ENCODE measurements at regions of chr17 and their contacts with region 1.

Region 1: GRCh38 chr17:7484067-7484918 is at the start of gene POLR2A:
- DNase-seq: peak; percentile 96 to 99
- H3K4me3 ChIP-seq: peak within 1 kb of the TSS; percentile 71 to 84
- H3K27ac ChIP-seq: peak within 1 kb of the TSS; percentile 98 to 100
- H3K4me1 ChIP-seq: peaks cover 12 to 50% of the 10 kb centered on the region in 2 donors
- H3K27me3 ChIP-seq: no peaks in the 10 kb centered on the region
- CTCF ChIP-seq: no peak
- total RNA-seq, gene POLR2A: 69.5 TPM

Region 2: DNA sequence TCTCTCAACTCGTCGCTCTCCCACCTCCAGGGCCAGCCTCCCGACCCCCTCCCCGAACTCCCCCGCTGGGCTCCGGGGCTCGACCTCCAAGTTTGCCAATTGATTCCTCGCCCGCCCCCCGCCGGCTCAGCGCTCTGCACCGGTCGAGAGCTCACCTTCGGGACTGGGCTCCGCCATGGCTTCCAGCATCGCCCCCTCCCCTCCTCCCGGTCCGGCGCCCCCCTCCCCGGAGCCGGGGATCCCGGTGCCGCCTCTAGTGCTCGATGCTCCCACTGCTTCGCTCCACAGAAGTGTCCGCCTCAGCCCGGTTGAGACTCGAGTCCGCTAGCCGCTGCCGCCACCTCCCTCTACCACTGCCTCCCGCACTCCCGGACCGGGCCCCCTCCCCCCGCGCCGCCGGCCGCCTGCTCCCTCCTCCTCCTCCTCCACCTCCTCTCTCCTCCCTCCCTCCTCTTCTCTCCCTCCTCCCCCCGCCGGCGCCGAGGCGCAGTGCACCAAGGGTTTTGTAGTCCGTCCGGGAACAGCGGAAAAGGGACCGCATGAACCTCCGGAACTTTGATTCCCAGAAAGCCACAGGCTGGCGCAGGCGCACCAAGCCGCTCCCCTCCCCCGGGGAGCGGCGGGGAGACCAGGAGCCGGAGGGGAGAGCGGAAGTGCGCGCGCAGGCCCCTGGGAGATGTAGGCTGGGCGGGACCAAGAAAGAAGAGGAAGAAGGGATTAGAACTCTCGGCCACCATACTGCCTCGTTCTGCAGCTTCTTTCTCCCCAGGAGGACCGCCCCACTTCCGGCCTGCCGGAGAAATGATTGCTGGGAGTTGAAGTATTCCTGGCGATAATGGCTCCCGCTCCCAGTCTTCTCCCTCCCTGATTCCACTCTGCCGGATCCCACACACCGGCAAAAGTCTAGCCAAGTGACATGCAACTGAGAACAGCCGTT is 244.9 kb before region 1 on chr17 and contains the start of gene PHF23:
- intact Hi-C with region 1: loop called (anchors 2 kb)
- DNase-seq: peak; percentile 99 to 100
- H3K4me3 ChIP-seq: peak within 1 kb of the TSS; percentile 92 to 99
- H3K27ac ChIP-seq: peak within 1 kb of the TSS; percentile 88 to 96
- H3K4me1 ChIP-seq: peaks cover 12 to 25% of the 10 kb centered on the region in 2 donors
- H3K27me3 ChIP-seq: no peaks in the 10 kb centered on the region
- CTCF ChIP-seq: peak in 1 of 3 experiments; percentile 37
- total RNA-seq, gene PHF23: 13.3 TPM

Region 3: DNA sequence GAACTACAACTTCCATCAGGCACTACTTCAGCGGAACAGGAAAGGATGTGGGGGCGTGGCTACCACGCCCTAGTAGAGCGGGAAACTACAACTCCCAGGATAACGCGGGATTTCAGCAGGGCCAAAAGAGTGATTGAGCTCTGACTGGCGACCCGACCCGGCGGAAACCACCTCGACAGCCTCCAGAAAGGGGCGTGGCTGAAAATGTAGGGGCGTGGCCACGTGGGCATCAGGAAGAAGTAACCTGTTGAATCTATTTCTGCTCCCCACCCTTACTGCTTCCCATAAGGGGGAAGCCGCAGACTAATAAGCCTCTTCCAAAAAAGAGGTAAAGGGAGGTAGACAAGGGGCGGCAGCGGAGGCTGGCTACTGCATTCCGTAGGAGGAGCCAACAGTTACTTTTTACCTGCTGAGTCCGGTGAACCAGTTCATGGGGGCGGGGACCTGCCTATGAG is 49.0 kb before region 1 on chr17 and contains the start of gene TMEM102:
- intact Hi-C with region 1: loop called (anchors 1 kb)
- DNase-seq: peak; percentile 92 to 98
- H3K4me3 ChIP-seq: peak within 1 kb of the TSS; percentile 59 to 69
- H3K27ac ChIP-seq: peak within 1 kb of the TSS; percentile 45 to 52
- H3K4me1 ChIP-seq: peaks cover 14 to 30% of the 10 kb centered on the region in 2 donors
- H3K27me3 ChIP-seq: peaks cover 14% of the 10 kb centered on the region
- CTCF ChIP-seq: no peak
- total RNA-seq, gene TMEM102: 20.4 TPM

Region 4: GRCh38 chr17:7561028-7561575 is 76.8 kb after region 1 on chr17:
- intact Hi-C with region 1: loop called (anchors 1 kb)
- DNase-seq: peak; percentile 57 to 94
- H3K4me3 ChIP-seq: peak overlapping the region; percentile 67 to 92
- H3K27ac ChIP-seq: peak overlapping the region; percentile 90 to 97
- H3K4me1 ChIP-seq: peaks cover 39 to 56% of the 10 kb centered on the region in 2 donors
- H3K27me3 ChIP-seq: no peaks in the 10 kb centered on the region
- CTCF ChIP-seq: peak; percentile 84 to 96 (median 84)

Region 5: DNA sequence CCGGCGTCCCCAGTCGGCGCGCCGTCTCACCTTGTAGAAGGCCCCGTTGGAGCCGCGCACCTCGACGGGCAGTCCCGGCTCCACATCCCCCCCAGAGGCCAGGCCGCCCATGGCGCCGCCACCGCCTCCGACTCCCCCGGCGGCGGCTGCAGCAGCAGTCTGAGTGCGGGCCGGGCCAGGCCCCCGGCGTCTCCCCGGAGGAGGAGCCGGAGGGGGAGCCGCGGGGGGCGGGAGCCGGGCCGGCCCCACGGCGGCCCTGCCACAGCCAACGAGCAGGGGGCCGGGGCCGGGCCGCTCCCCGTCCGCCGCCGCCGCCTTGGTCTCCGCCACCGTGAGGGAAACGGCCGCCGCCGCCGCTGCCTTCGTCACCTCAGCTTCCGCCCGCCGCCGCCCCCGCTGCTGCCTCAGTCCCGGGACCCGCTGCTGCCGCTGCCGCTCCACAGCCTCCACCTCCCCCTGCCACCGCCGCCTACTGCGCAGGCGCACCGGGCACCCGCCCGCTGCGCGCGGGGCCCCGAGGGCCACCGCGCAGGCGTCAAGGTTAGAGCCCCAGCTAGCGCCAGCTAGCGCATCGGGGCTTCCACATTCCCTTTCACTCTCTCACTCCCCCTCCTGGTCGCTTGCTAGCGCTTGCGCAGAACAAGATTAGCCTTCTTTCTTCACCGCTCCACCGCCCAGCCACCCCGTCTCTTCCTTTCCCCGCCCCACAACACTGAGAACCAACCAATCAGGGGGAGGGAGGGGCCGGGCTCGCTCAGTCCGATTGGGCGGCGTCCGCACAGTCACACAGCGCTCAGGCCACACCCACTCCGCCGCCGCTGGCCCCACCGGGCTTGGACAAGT is 130.3 kb after region 1 on chr17 and contains the start of gene FXR2:
- intact Hi-C with region 1: loop called (anchors 1 kb)
- DNase-seq: peak; percentile 98 to 100
- H3K4me3 ChIP-seq: peak within 1 kb of the TSS; percentile 91 to 97
- H3K27ac ChIP-seq: peak within 1 kb of the TSS; percentile 85 to 89
- H3K4me1 ChIP-seq: peaks cover 0 to 26% of the 10 kb centered on the region in 2 donors
- H3K27me3 ChIP-seq: no peaks in the 10 kb centered on the region
- CTCF ChIP-seq: peak; percentile 61 to 67 (median 62)
- total RNA-seq, gene FXR2: 19.3 TPM

Region 6: GRCh38 chr17:8156246-8156992 is 672.1 kb after region 1 on chr17:
- intact Hi-C with region 1: loop called (anchors 5 kb)
- DNase-seq: peak; percentile 100
- H3K4me3 ChIP-seq: peak overlapping the region; percentile 77 to 90
- H3K27ac ChIP-seq: peak overlapping the region; percentile 99 to 100
- H3K4me1 ChIP-seq: peaks cover 13 to 46% of the 10 kb centered on the region in 2 donors
- H3K27me3 ChIP-seq: no peaks in the 10 kb centered on the region
- CTCF ChIP-seq: peak in 1 of 3 experiments; percentile 22